CD8-positive, alpha-beta T cell (primary cell): ENCODE measurements at regions of chr19 and their contacts with region 1.

Region 1: GRCh38 chr19:58326914-58327726 is at the start of gene ZSCAN22:
- DNase-seq: peak; percentile 76 to 94 (median 89)
- ATAC-seq: peak; percentile 78
- H3K4me3 ChIP-seq: peak within 1 kb of the TSS; percentile 84 to 96
- H3K4me3 Mint-ChIP-seq: no peak within 1 kb of the TSS
- H3K27ac ChIP-seq: peak within 1 kb of the TSS; percentile 77 to 96
- H3K27ac Mint-ChIP-seq: no peak within 1 kb of the TSS
- H3K4me1 ChIP-seq: peaks cover 19% of the 10 kb centered on the region
- H3K4me1 Mint-ChIP-seq: peaks cover 3% of the 10 kb centered on the region
- H3K27me3 ChIP-seq: no peaks in the 10 kb centered on the region
- H3K27me3 Mint-ChIP-seq: no peaks in the 10 kb centered on the region
- CTCF ChIP-seq: no peak
- total RNA-seq, gene ZSCAN22: 1.7 to 2.2 TPM

Region 2: GRCh38 chr19:58346961-58347931 is 20.1 kb after region 1 on chr19:
- CTCF ChIA-PET with region 1: interaction called, 3 read pairs
- POLR2A ChIA-PET with region 1: no interaction called
- intact Hi-C with region 1: loop called (anchors 1 kb)
- DNase-seq: peak; percentile 41 to 86 (median 71)
- ATAC-seq: peak; percentile 90
- H3K4me3 ChIP-seq: peak overlapping the region; percentile 72 to 95
- H3K4me3 Mint-ChIP-seq: peak overlapping the region; percentile 91
- H3K27ac ChIP-seq: peak overlapping the region; percentile 63 to 85
- H3K27ac Mint-ChIP-seq: peak overlapping the region; percentile 93
- H3K4me1 ChIP-seq: peaks cover 17% of the 10 kb centered on the region
- H3K4me1 Mint-ChIP-seq: peaks cover 35% of the 10 kb centered on the region
- H3K27me3 ChIP-seq: no peaks in the 10 kb centered on the region
- H3K27me3 Mint-ChIP-seq: no peaks in the 10 kb centered on the region
- CTCF ChIP-seq: no peak

Region 3: GRCh38 chr19:58386576-58387337 is 59.6 kb after region 1 on chr19 and contains the start of gene RPS5:
- CTCF ChIA-PET with region 1: no interaction called
- POLR2A ChIA-PET with region 1: no interaction called
- intact Hi-C with region 1: no loop called
- DNase-seq: peak; percentile 92 to 100 (median 95)
- ATAC-seq: peak; percentile 88
- H3K4me3 ChIP-seq: peak within 1 kb of the TSS; percentile 88 to 90
- H3K4me3 Mint-ChIP-seq: peak within 1 kb of the TSS; percentile 93
- H3K27ac ChIP-seq: peak within 1 kb of the TSS; percentile 94 to 98
- H3K27ac Mint-ChIP-seq: peak within 1 kb of the TSS; percentile 99
- H3K4me1 ChIP-seq: peaks cover 41% of the 10 kb centered on the region
- H3K4me1 Mint-ChIP-seq: peaks cover 52% of the 10 kb centered on the region
- H3K27me3 ChIP-seq: no peaks in the 10 kb centered on the region
- H3K27me3 Mint-ChIP-seq: no peaks in the 10 kb centered on the region
- CTCF ChIP-seq: no peak
- total RNA-seq, gene RPS5: 1,884 to 1,887 TPM